PC-9 (cell line): ENCODE measurements at regions of chr14 and their contacts with region 1.

Region 1: DNA sequence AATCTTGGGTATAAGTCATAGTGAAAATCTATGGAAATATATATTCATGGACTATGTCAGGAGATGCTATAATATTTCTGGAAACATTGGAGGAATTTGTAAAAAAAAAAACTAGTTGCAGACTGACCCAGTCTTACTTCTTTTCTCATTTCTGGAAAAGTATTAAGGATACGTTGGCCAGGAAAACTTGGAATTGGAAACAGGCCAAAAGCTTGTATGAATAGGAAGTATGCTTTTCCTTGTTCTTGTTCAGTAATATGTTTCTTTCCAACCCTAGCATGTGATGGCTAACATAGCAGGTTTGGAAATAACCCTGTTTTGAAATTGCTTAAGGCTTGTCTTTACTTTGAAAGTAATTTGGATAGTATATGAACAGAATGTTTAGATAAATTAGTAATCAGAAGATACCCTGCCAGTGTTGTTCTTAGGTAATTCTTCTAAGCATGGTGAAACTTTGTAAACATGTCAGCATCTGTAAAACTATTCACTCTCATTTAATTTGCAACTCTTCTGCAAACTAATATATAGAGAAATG is 316.2 kb downstream of the NPAS3 start:
- DNase-seq: no peak
- H3K4me3 ChIP-seq: no peak overlapping the region
- H3K27ac ChIP-seq: no peak overlapping the region
- H3K4me1 ChIP-seq: no peaks in the 10 kb centered on the region
- H3K27me3 ChIP-seq: no peaks in the 10 kb centered on the region
- CTCF ChIP-seq: no peak

Region 2: GRCh38 chr14:32682214-32682613 is 572.7 kb before region 1 on chr14:
- CTCF ChIA-PET with region 1: no interaction called
- POLR2A ChIA-PET with region 1: interaction called, 10 read pairs
- intact Hi-C with region 1: no loop called
- DNase-seq: no peak
- H3K4me3 ChIP-seq: no peak overlapping the region
- H3K27ac ChIP-seq: no peak overlapping the region
- H3K4me1 ChIP-seq: no peaks in the 10 kb centered on the region
- H3K27me3 ChIP-seq: no peaks in the 10 kb centered on the region
- CTCF ChIP-seq: no peak